CD8-positive, alpha-beta T cell (primary cell): ENCODE measurements at regions of chr4 and their contacts with region 1.

Region 1: GRCh38 chr4:152510349-152511147 is 25.3 kb downstream of the FBXW7 start:
- DNase-seq: peak in 1 of 9 experiments; percentile 28
- ATAC-seq: peak; percentile 31
- H3K4me3 ChIP-seq: peak overlapping the region in 1 of 2 experiments; percentile 28
- H3K4me3 Mint-ChIP-seq: peak overlapping the region; percentile 65
- H3K27ac ChIP-seq: peak overlapping the region in 1 of 2 experiments; percentile 62
- H3K27ac Mint-ChIP-seq: peak overlapping the region; percentile 29
- H3K4me1 ChIP-seq: peaks cover 6% of the 10 kb centered on the region
- H3K4me1 Mint-ChIP-seq: peaks cover 57% of the 10 kb centered on the region
- H3K27me3 ChIP-seq: no peaks in the 10 kb centered on the region
- H3K27me3 Mint-ChIP-seq: no peaks in the 10 kb centered on the region
- CTCF ChIP-seq: no peak

Region 2: GRCh38 chr4:152525873-152526272 is 15.3 kb after region 1 on chr4:
- CTCF ChIA-PET with region 1: no interaction called
- POLR2A ChIA-PET with region 1: interaction called, 3 read pairs
- intact Hi-C with region 1: loop called in 1 of 2 experiments (anchors 1 kb)
- DNase-seq: no peak
- ATAC-seq: no peak
- H3K4me3 ChIP-seq: no peak overlapping the region
- H3K4me3 Mint-ChIP-seq: no peak overlapping the region
- H3K27ac ChIP-seq: no peak overlapping the region
- H3K27ac Mint-ChIP-seq: no peak overlapping the region
- H3K4me1 ChIP-seq: peaks cover 12% of the 10 kb centered on the region
- H3K4me1 Mint-ChIP-seq: peaks cover 73% of the 10 kb centered on the region
- H3K27me3 ChIP-seq: no peaks in the 10 kb centered on the region
- H3K27me3 Mint-ChIP-seq: no peaks in the 10 kb centered on the region
- CTCF ChIP-seq: no peak

Region 3: GRCh38 chr4:152545088-152545487 is 34.5 kb after region 1 on chr4:
- CTCF ChIA-PET with region 1: no interaction called
- POLR2A ChIA-PET with region 1: no interaction called
- intact Hi-C with region 1: no loop called
- DNase-seq: no peak
- ATAC-seq: no peak
- H3K4me3 ChIP-seq: no peak overlapping the region
- H3K4me3 Mint-ChIP-seq: no peak overlapping the region
- H3K27ac ChIP-seq: no peak overlapping the region
- H3K27ac Mint-ChIP-seq: peak overlapping the region; percentile 53
- H3K4me1 ChIP-seq: no peaks in the 10 kb centered on the region
- H3K4me1 Mint-ChIP-seq: peaks cover 23% of the 10 kb centered on the region
- H3K27me3 ChIP-seq: no peaks in the 10 kb centered on the region
- H3K27me3 Mint-ChIP-seq: no peaks in the 10 kb centered on the region
- CTCF ChIP-seq: no peak

Region 4: DNA sequence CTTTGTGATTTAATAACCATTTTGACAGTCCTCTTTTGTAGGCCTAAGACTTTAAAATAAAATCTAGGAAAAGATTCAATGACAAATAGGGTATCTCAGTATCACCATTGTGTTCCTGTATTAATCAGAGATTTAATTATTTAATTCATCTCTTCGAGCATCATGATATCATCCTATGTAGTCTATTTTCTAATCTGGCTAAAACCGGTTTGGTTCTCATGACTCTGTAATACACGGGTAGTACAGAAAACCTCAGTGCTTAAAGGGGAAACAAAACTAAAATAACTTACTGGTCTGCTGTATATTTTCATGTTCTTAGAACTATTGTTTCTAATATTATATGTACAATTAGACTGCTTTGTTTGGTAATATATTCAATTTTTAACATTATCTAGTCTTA is 49.1 kb after region 1 on chr4:
- CTCF ChIA-PET with region 1: no interaction called
- POLR2A ChIA-PET with region 1: no interaction called
- intact Hi-C with region 1: loop called in 1 of 2 experiments (anchors 5 kb)
- DNase-seq: no peak
- ATAC-seq: no peak
- H3K4me3 ChIP-seq: no peak overlapping the region
- H3K4me3 Mint-ChIP-seq: no peak overlapping the region
- H3K27ac ChIP-seq: no peak overlapping the region
- H3K27ac Mint-ChIP-seq: no peak overlapping the region
- H3K4me1 ChIP-seq: peaks cover 4% of the 10 kb centered on the region
- H3K4me1 Mint-ChIP-seq: peaks cover 16% of the 10 kb centered on the region
- H3K27me3 ChIP-seq: no peaks in the 10 kb centered on the region
- H3K27me3 Mint-ChIP-seq: no peaks in the 10 kb centered on the region
- CTCF ChIP-seq: no peak